GM18951 (cell line): ENCODE measurements at regions of chr2 and their contacts with region 1.

Region 1: DNA sequence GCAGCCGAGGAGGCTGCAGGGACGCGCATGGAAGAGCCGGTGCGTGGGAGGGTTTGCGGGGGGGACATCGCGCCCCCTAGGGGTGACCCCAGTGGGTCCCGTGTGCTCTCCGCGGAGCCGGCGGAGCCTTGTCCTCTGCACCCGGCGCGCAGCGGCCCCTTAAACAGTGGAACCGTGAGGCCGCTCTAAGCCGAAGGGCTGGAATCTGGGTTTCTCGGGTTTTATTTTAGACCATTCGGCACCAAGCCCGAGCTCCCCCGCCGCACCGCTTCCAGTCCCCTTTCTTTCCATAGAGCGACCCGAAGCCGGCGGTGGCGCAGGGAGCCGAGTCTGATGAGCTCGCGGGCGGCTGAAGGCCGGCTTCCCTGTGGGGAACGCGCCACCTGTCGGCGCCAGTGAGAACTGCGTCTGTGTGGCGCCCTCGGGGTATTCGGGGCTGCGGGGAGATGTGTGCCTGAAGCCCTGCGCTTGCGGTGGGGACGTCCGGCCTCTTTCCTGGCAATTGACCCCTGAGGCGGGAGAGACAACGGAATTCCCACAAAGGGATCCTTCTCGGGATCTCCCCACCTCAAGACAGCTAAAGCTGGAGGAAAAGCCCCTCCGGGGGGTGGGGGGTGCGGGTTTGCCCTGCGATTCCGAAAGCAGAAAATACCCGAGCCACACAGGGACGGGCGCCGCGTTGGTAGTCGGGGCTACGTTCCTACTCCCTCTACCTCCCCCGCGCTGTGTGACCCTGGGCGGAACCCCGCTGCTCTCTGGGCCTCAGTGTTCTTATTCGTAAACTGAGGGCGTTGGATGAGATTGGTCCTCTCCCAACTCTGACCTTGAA is 8.2 kb upstream of the EN1 start:
- POLR2A ChIP-seq: no peak

Region 2: GRCh38 chr2:118032169-118033013 is 823.3 kb before region 1 on chr2:
- in situ Hi-C with region 1: loop called (anchors 25 kb)
- POLR2A ChIP-seq: no peak

Region 3: GRCh38 chr2:118221666-118222594 is 633.7 kb before region 1 on chr2:
- in situ Hi-C with region 1: loop called (anchors 10 kb)
- POLR2A ChIP-seq: no peak

Region 4: DNA sequence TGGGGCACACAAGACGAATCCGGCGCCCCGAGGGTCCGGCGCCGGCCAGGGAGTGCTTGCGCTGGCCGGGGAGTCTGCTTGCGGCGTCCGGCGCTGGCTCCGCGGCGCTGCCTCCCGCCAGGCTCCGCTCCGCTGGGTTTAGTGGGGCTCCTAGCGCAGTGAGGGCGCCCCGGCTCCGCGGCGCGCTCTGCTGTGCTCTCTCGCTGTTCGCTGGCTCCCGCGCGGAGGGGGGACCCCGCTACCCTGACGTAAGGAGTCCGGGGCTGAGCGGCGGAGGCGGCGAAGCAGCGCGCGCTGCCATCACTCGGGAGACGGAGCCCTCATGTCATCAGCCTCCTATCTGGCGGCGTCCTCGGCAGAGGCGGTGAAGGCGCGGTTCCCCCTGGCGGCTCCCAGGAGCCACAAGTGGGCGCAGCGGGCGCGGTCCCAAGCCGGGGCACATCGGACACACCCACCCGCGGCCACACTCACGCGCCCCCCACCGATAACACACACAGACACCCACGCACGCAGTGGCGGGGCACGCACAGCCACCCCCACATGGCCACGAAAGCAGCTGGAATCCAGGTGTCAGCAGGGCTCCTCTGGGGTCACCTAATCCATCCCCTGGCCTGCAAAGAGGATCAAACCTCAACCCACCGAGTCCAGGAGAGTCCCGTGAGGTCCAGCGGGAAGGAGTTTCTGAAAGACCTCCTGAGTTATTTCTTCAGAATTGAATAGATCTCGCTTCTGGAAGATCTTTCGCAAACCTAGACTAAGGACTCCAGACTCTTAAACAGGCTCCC is 303.1 kb after region 1 on chr2 and contains the start of gene C1QL2:
- in situ Hi-C with region 1: no loop called
- POLR2A ChIP-seq: no peak